ENCODE measurements at regions of chr9 and their contacts with region 1.

Region 1: DNA sequence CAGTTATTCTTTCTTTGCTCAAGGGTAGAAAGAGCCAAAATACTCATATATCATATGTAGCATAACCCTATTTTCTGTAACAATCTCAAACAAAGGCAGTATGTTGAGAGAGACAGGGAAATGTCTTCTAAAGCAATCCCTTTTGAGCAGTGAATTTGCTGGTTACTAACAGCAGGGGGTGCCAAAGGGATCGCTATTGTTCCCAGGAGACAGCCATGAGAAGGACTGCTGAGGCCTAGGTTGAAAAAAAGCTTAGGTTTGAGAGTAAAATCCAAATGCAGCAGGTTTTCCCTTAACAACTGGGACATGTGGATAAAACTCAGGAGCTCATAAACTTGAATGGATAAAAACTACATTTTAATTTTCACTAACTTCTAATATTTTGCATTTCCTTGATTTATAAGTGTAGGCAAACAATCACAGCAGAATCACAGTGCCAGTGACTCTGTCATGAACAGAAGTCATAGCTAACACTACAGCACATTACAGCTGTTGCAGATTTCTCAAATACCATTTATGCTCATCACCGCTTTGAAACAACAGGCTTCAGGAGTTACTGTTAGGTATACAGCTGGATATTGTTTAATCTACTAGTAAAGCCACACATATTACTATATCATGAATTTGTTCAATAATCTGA is 148.4 kb downstream of the MAPKAP1 start:
- DNase-seq: peak; percentile 79
- H3K4me3 ChIP-seq: no peak overlapping the region
- H3K27ac ChIP-seq: no peak overlapping the region
- H3K4me1 ChIP-seq: no peaks in the 10 kb centered on the region
- H3K27me3 ChIP-seq: no peaks in the 10 kb centered on the region
- CTCF ChIP-seq: peak; percentile 78

Region 2: GRCh38 chr9:125631391-125632085 is 73.0 kb after region 1 on chr9:
- CTCF ChIA-PET with region 1: no interaction called
- POLR2A ChIA-PET with region 1: no interaction called
- intact Hi-C with region 1: loop called (anchors 5 kb)
- DNase-seq: peak; percentile 58
- H3K4me3 ChIP-seq: no peak overlapping the region
- H3K27ac ChIP-seq: no peak overlapping the region
- H3K4me1 ChIP-seq: peaks cover 14% of the 10 kb centered on the region
- H3K27me3 ChIP-seq: no peaks in the 10 kb centered on the region
- CTCF ChIP-seq: peak; percentile 73

Region 3: GRCh38 chr9:125763394-125763801 is 204.8 kb after region 1 on chr9:
- CTCF ChIA-PET with region 1: no interaction called
- POLR2A ChIA-PET with region 1: no interaction called
- intact Hi-C with region 1: loop called (anchors 10 kb)
- DNase-seq: peak; percentile 33
- H3K4me3 ChIP-seq: no peak overlapping the region
- H3K27ac ChIP-seq: no peak overlapping the region
- H3K4me1 ChIP-seq: peaks cover 9% of the 10 kb centered on the region
- H3K27me3 ChIP-seq: peaks cover 93% of the 10 kb centered on the region
- CTCF ChIP-seq: no peak

Region 4: GRCh38 chr9:126228781-126229444 is 670.3 kb after region 1 on chr9:
- CTCF ChIA-PET with region 1: no interaction called
- POLR2A ChIA-PET with region 1: no interaction called
- intact Hi-C with region 1: loop called (anchors 10 kb)
- DNase-seq: peak; percentile 76
- H3K4me3 ChIP-seq: no peak overlapping the region
- H3K27ac ChIP-seq: no peak overlapping the region
- H3K4me1 ChIP-seq: no peaks in the 10 kb centered on the region
- H3K27me3 ChIP-seq: peaks cover 63% of the 10 kb centered on the region
- CTCF ChIP-seq: peak; percentile 96